H1 (cell line): ENCODE measurements at regions of chr11 and their contacts with region 1.

Region 1: DNA sequence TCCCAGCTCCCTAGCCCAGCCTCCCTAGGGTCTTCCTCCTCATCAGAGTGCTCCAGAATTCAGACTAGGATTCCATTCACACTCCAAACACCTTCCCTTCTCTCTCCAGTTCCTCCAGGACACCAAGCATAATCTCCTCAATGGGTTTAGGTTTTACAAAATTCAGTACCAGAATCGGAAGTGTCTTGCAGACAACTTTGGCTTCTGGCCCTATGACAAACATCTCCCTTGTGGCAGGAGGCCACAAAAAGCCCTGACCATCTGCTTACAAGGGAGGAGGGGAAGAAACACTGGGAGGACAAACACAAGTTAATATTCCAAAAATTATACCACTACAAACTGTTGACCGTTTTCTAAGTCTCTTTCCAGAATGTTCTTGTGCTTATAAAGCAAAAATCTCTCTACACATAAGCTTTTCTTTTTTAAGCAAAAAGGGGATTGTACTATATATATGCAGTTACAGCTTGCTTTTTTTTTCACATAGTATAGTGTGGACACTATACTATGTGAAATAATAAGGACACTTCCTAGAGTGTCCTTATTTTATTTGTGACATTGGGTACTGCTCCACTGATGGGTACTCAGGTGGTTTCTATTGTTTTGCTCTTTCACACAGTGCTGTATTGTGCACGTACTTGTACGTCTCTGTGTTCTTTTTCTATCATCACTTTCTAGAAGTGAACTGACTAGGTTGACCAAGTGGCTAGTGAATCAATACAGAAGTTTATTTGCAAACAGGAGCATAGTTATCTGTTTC is 78.7 kb downstream of the BDNF start:
- DNase-seq: no peak
- H3K4me3 ChIP-seq: no peak overlapping the region
- H3K27ac ChIP-seq: no peak overlapping the region
- H3K4me1 ChIP-seq: peaks cover 0 to 10% (median 0%) of the 10 kb centered on the region in 4 experiments; a peak in 3 of 7 replicates
- H3K27me3 ChIP-seq: no peaks in the 10 kb centered on the region
- CTCF ChIP-seq: no peak
- EP300 ChIP-seq: no peak
- POLR2A ChIP-seq: peak in 1 of 2 experiments; percentile 63; a peak in 1 of 3 replicates
- RAD21 ChIP-seq: no peak

Region 2: DNA sequence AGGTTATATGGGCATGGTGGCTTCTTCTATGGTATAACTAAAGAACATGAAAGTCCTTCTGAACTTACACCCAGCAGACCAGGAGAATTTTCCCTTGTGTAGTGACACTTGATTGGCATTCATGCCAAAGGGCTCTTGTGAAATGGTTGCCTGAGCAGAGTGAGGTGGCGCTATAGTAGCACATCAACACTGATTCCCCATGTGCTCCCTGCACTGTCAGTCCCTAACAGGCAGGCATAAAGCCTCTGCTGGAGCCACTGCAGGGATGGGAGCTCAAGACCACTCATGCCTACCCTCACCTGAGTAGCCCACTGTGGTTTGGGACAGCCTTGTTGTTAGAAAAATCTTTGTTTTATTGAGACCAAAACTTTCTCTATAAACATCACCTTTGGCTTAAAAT is 22.4 kb before region 1 on chr11:
- CTCF ChIA-PET with region 1: interaction called, 5 read pairs
- POLR2A ChIA-PET with region 1: interaction called, 80 read pairs
- DNase-seq: no peak
- H3K4me3 ChIP-seq: no peak overlapping the region
- H3K27ac ChIP-seq: no peak overlapping the region
- H3K4me1 ChIP-seq: peaks cover 0 to 5% (median 0%) of the 10 kb centered on the region in 4 experiments; a peak in 1 of 7 replicates
- H3K27me3 ChIP-seq: peaks cover 0 to 5% (median 0%) of the 10 kb centered on the region in 4 experiments; a peak in 1 of 7 replicates
- CTCF ChIP-seq: peak; percentile 39 to 63 (median 61); a peak in 3 of 4 replicates
- EP300 ChIP-seq: no peak
- POLR2A ChIP-seq: no peak
- RAD21 ChIP-seq: peak; percentile 53 to 64

Region 3: GRCh38 chr11:27646051-27646818 is 24.7 kb after region 1 on chr11:
- CTCF ChIA-PET with region 1: no interaction called
- POLR2A ChIA-PET with region 1: interaction called, 189 read pairs
- DNase-seq: no peak
- H3K4me3 ChIP-seq: no peak overlapping the region
- H3K27ac ChIP-seq: no peak overlapping the region
- H3K4me1 ChIP-seq: peaks cover 2 to 13% (median 3%) of the 10 kb centered on the region in 4 experiments; a peak in 4 of 7 replicates
- H3K27me3 ChIP-seq: no peaks in the 10 kb centered on the region; a peak in 1 of 7 replicates
- CTCF ChIP-seq: no peak
- EP300 ChIP-seq: no peak
- POLR2A ChIP-seq: no peak
- RAD21 ChIP-seq: no peak

Region 4: DNA sequence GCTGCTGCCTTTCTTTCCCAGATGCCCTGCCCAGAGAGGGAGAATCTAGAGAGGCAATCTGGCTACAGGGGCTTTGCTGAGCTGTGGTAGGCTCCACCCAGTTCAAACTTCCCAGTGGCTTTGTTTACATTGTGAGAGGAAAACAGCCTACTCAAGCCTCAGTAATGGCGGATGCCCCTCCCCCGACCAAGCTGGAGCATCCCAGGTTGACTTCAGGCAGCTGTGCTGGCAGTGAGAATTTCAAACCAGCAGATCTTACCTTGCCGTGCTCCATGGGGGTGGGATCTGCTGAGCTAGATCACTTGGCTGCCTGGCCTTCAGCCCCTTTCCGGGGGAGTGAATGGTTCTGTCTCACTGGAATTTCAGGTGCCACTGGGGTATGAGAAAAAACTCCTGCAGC is 66.5 kb after region 1 on chr11:
- CTCF ChIA-PET with region 1: interaction called, 3 read pairs
- POLR2A ChIA-PET with region 1: interaction called, 25 read pairs
- DNase-seq: peak in 1 of 2 experiments; percentile 71
- H3K4me3 ChIP-seq: peak overlapping the region in 1 of 4 experiments; percentile 3; a peak in 1 of 8 replicates
- H3K27ac ChIP-seq: no peak overlapping the region
- H3K4me1 ChIP-seq: peaks cover 4 to 11% (median 6%) of the 10 kb centered on the region in 4 experiments; a peak in 6 of 7 replicates
- H3K27me3 ChIP-seq: no peaks in the 10 kb centered on the region
- CTCF ChIP-seq: no peak
- EP300 ChIP-seq: peak in 1 of 2 experiments; percentile 35; a peak in 1 of 3 replicates
- POLR2A ChIP-seq: no peak
- RAD21 ChIP-seq: peak in 1 of 2 experiments; percentile 7; a peak in 1 of 4 replicates

Region 5: GRCh38 chr11:27720277-27720830 is 98.8 kb after region 1 on chr11:
- CTCF ChIA-PET with region 1: interaction called, 5 read pairs
- POLR2A ChIA-PET with region 1: interaction called, 17 read pairs
- DNase-seq: peak in 1 of 2 experiments; percentile 86
- H3K4me3 ChIP-seq: peak overlapping the region; percentile 63 to 99 (median 78)
- H3K27ac ChIP-seq: no peak overlapping the region
- H3K4me1 ChIP-seq: peaks cover 5 to 15% (median 10%) of the 10 kb centered on the region in 4 experiments
- H3K27me3 ChIP-seq: peaks cover 7 to 29% (median 25%) of the 10 kb centered on the region in 4 experiments
- CTCF ChIP-seq: peak; percentile 28 to 34 (median 29); a peak in 3 of 4 replicates
- EP300 ChIP-seq: no peak
- POLR2A ChIP-seq: no peak
- RAD21 ChIP-seq: peak; percentile 8 to 25; a peak in 3 of 4 replicates